ENCODE measurements at regions of chr10 and their contacts with region 1.

Region 1: GRCh38 chr10:75235375-75236177 is at the start of gene COMTD1:
- DNase-seq: peak; percentile 82 to 96 (median 91)
- ATAC-seq: peak; percentile 82
- H3K4me3 ChIP-seq: peak within 1 kb of the TSS; percentile 80
- H3K4me3 Mint-ChIP-seq: peak within 1 kb of the TSS; percentile 74 to 88 (median 82)
- H3K27ac ChIP-seq: peak within 1 kb of the TSS; percentile 78
- H3K27ac Mint-ChIP-seq: peak within 1 kb of the TSS; percentile 73 to 97 (median 86)
- H3K4me1 ChIP-seq: peaks cover 4 to 11% of the 10 kb centered on the region in 2 donors
- H3K4me1 Mint-ChIP-seq: peaks cover 10 to 23% (median 16%) of the 10 kb centered on the region in 7 donors
- H3K27me3 ChIP-seq: no peaks in the 10 kb centered on the region
- H3K27me3 Mint-ChIP-seq: no peaks in the 10 kb centered on the region
- total RNA-seq, gene COMTD1: 10.1 to 29.2 (median 15.8) TPM

Region 2: DNA sequence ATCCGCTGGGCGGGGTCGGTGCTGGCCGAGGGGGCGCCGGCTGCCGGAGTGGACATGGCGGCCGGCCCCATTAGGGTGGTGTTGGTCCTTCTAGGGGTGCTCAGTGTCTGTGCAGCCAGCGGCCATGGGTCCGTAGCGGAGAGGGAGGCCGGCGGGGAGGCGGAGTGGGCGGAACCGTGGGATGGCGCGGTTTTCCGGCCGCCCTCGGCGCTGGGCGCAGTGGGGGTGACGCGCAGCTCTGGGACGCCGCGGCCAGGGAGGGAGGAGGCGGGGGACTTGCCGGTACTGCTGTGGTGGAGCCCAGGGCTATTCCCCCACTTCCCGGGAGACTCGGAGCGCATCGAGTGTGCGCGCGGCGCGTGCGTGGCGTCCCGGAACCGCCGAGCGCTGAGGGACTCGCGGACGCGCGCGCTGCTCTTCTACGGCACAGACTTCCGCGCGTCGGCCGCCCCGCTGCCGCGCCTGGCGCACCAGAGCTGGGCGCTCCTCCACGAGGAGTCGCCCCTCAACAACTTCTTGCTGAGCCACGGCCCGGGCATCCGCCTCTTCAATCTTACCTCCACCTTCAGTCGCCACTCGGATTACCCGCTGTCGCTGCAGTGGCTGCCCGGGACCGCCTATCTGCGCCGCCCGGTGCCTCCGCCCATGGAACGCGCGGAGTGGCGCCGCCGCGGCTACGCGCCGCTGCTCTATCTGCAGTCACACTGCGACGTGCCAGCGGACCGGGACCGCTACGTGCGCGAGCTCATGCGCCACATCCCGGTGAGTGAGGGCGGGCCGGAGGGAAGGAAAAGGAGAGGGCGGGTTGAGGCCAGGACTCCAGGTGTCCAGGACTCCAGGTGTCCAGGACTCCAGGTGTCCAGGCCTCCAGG is 1463.1 kb before region 1 on chr10:
- CTCF ChIA-PET with region 1: no interaction called
- POLR2A ChIA-PET with region 1: no interaction called
- intact Hi-C with region 1: loop called in 1 of 2 experiments (anchors 5 kb)
- DNase-seq: peak; percentile 75 to 90 (median 83)
- ATAC-seq: peak; percentile 80
- H3K4me3 ChIP-seq: peak overlapping the region; percentile 69
- H3K4me3 Mint-ChIP-seq: peak overlapping the region; percentile 87 to 97 (median 95)
- H3K27ac ChIP-seq: peak overlapping the region; percentile 85
- H3K27ac Mint-ChIP-seq: peak overlapping the region; percentile 89 to 97 (median 94)
- H3K4me1 ChIP-seq: peaks cover 27 to 30% of the 10 kb centered on the region in 2 donors
- H3K4me1 Mint-ChIP-seq: peaks cover 34 to 73% (median 64%) of the 10 kb centered on the region in 7 donors
- H3K27me3 ChIP-seq: no peaks in the 10 kb centered on the region
- H3K27me3 Mint-ChIP-seq: no peaks in the 10 kb centered on the region

Region 3: DNA sequence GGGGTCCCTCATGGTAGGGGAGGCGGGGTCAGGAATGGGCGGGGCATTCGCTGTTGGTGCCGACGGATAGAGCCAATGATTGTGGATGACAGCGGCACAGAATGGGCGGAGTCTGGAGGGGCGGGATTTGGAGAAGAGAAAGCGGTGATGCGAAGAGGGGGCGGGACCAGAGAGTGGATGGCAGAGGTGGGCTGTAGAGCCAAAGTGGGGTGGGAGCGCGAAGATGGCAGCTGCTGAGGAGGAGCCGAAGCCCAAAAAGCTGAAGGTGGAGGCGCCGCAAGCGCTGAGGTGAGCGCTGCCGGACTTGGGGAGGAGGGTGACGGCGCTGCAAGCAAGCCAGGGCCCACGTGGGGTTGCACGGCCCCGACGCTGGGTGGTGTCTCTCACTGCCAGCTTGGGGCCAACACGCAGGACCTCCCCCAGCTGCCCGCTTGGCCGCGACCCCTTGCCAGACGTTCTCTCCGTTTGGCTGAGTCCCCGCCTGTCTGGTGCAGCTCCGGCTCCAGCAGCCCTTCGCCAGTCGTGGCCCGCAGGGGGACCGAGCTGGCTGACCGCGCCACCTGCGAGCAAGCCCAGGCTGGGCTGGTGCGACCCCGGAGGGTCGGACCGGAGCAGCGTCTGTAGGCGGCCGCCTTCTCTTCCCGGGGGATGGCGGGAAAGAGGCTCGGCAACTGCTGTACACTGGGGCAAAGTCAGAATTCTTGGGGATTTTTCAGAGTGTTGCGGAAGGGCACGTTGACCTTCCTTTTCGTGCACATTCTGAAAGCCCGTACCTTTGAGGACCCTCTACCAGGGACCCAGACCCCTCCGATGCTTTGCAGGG is 1084.3 kb before region 1 on chr10 and contains the start of gene ADK:
- CTCF ChIA-PET with region 1: no interaction called
- POLR2A ChIA-PET with region 1: no interaction called
- intact Hi-C with region 1: loop called (anchors 1 kb)
- DNase-seq: peak in 8 of 9 donors; percentile 96 to 100 (median 99)
- ATAC-seq: peak; percentile 99
- H3K4me3 ChIP-seq: peak within 1 kb of the TSS; percentile 90
- H3K4me3 Mint-ChIP-seq: no peak within 1 kb of the TSS
- H3K27ac ChIP-seq: peak within 1 kb of the TSS; percentile 84
- H3K27ac Mint-ChIP-seq: peak within 1 kb of the TSS in 5 of 9 donors; percentile 8 to 78 (median 47)
- H3K4me1 ChIP-seq: peaks cover 17 to 23% of the 10 kb centered on the region in 2 donors
- H3K4me1 Mint-ChIP-seq: peaks cover 36 to 56% (median 47%) of the 10 kb centered on the region in 7 donors
- H3K27me3 ChIP-seq: no peaks in the 10 kb centered on the region
- H3K27me3 Mint-ChIP-seq: no peaks in the 10 kb centered on the region
- total RNA-seq, gene ADK: 20.7 to 32.6 (median 25.0) TPM

Region 4: DNA sequence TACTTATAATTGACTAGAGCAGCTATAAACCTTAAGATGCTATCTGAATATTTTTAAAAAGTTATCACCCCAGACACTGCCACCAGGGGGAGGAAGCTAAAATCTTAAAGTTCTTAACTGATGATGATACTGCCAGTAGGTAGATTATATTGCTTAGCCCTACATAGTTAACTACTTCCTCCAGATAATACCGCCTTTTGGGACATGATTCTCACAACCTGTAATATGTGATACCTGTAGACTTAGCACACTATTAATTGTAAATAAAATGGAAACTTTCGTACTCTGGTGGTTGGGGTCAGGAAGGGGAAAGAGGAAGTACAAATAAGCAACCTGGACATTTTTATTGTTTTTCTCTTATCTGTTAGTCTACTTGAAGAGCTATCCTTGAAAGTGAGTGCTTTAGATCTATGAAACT is 815.6 kb before region 1 on chr10:
- CTCF ChIA-PET with region 1: interaction called, 3 read pairs
- POLR2A ChIA-PET with region 1: no interaction called
- intact Hi-C with region 1: loop called in 1 of 2 experiments (anchors 5 kb)
- DNase-seq: peak in 7 of 9 donors; percentile 15 to 53 (median 48)
- ATAC-seq: peak; percentile 63
- H3K4me3 ChIP-seq: no peak overlapping the region
- H3K4me3 Mint-ChIP-seq: no peak overlapping the region
- H3K27ac ChIP-seq: no peak overlapping the region
- H3K27ac Mint-ChIP-seq: peak overlapping the region in 1 of 9 donors; percentile 57
- H3K4me1 ChIP-seq: no peaks in the 10 kb centered on the region
- H3K4me1 Mint-ChIP-seq: peaks cover 5 to 12% (median 7%) of the 10 kb centered on the region in 7 donors
- H3K27me3 ChIP-seq: no peaks in the 10 kb centered on the region
- H3K27me3 Mint-ChIP-seq: no peaks in the 10 kb centered on the region

Region 5: DNA sequence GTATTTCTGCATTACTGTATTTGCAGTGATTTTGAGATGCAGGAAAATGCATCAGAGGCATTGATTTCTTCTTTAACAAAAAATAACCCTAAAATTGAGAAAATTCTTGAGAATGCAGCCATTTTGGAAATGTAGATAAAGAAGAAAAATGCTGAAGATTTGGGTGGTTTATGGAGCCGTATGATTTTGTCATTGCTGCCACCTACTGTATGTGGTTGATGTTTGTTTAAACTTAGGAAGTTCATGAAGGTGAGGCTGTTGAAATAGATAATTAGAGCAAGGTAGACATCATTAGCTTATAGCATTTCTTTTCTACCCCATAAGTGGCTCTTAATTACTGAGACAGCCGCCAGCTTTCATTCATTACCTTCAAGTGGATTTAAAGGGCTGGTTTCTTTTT is 216.2 kb before region 1 on chr10:
- CTCF ChIA-PET with region 1: no interaction called
- POLR2A ChIA-PET with region 1: no interaction called
- intact Hi-C with region 1: loop called (anchors 1 to 5 kb)
- DNase-seq: peak in 7 of 9 donors; percentile 15 to 53 (median 43)
- ATAC-seq: peak; percentile 63
- H3K4me3 ChIP-seq: no peak overlapping the region
- H3K4me3 Mint-ChIP-seq: no peak overlapping the region
- H3K27ac ChIP-seq: no peak overlapping the region
- H3K27ac Mint-ChIP-seq: peak overlapping the region in 5 of 9 donors; percentile 4 to 62 (median 16)
- H3K4me1 ChIP-seq: peaks cover 8 to 12% of the 10 kb centered on the region in 2 donors
- H3K4me1 Mint-ChIP-seq: peaks cover 6 to 38% (median 23%) of the 10 kb centered on the region in 7 donors
- H3K27me3 ChIP-seq: no peaks in the 10 kb centered on the region
- H3K27me3 Mint-ChIP-seq: no peaks in the 10 kb centered on the region

Region 6: GRCh38 chr10:75187961-75188426 is 47.6 kb before region 1 on chr10:
- CTCF ChIA-PET with region 1: interaction called, 183 read pairs
- POLR2A ChIA-PET with region 1: interaction called, 8 read pairs
- intact Hi-C with region 1: loop called (anchors 1 kb)
- DNase-seq: peak; percentile 33 to 84 (median 77)
- ATAC-seq: peak; percentile 94
- H3K4me3 ChIP-seq: no peak overlapping the region
- H3K4me3 Mint-ChIP-seq: peak overlapping the region in 1 of 10 donors; percentile 11
- H3K27ac ChIP-seq: peak overlapping the region; percentile 59
- H3K27ac Mint-ChIP-seq: peak overlapping the region; percentile 58 to 98 (median 90)
- H3K4me1 ChIP-seq: peaks cover 4 to 5% of the 10 kb centered on the region in 2 donors
- H3K4me1 Mint-ChIP-seq: peaks cover 0 to 12% (median 7%) of the 10 kb centered on the region in 7 donors
- H3K27me3 ChIP-seq: no peaks in the 10 kb centered on the region
- H3K27me3 Mint-ChIP-seq: no peaks in the 10 kb centered on the region

Region 7: DNA sequence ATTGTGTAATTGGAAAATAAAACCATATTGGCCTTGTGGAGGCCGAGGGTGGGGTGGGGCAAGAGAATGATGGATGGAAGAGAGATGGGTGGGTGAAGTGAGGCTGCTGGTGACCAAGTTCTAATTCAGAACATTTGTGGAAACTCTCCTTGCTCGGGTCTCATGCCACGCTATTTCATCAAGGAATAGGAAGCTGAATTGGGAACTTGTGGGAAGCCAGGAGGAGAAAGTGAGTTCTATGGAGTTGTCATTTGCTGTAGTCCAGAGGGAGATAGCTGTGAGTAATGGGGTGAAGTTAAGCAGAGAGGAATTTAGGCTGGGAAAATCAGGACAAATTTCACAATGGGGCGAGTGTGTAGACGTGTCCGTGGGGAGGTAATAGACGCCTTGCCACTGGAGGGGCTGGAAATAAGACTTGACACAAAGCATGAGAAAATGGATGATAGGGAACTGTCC is 535.1 kb after region 1 on chr10:
- CTCF ChIA-PET with region 1: no interaction called
- POLR2A ChIA-PET with region 1: no interaction called
- intact Hi-C with region 1: no loop called
- DNase-seq: no peak
- ATAC-seq: no peak
- H3K4me3 ChIP-seq: no peak overlapping the region
- H3K4me3 Mint-ChIP-seq: peak overlapping the region in 6 of 10 donors; percentile 13 to 82 (median 37)
- H3K27ac ChIP-seq: no peak overlapping the region
- H3K27ac Mint-ChIP-seq: no peak overlapping the region
- H3K4me1 ChIP-seq: peaks cover 3% of the 10 kb centered on the region in 2 donors
- H3K4me1 Mint-ChIP-seq: peaks cover 6 to 30% (median 23%) of the 10 kb centered on the region in 7 donors
- H3K27me3 ChIP-seq: no peaks in the 10 kb centered on the region
- H3K27me3 Mint-ChIP-seq: peaks cover 0 to 9% (median 0%) of the 10 kb centered on the region in 5 donors